Activated CD4-positive, alpha-beta T cell treated with anti-CD3 and anti-CD28 coated beads for 36 hours (primary cell): ENCODE measurements at regions of chr3 and their contacts with region 1.

Region 1: DNA sequence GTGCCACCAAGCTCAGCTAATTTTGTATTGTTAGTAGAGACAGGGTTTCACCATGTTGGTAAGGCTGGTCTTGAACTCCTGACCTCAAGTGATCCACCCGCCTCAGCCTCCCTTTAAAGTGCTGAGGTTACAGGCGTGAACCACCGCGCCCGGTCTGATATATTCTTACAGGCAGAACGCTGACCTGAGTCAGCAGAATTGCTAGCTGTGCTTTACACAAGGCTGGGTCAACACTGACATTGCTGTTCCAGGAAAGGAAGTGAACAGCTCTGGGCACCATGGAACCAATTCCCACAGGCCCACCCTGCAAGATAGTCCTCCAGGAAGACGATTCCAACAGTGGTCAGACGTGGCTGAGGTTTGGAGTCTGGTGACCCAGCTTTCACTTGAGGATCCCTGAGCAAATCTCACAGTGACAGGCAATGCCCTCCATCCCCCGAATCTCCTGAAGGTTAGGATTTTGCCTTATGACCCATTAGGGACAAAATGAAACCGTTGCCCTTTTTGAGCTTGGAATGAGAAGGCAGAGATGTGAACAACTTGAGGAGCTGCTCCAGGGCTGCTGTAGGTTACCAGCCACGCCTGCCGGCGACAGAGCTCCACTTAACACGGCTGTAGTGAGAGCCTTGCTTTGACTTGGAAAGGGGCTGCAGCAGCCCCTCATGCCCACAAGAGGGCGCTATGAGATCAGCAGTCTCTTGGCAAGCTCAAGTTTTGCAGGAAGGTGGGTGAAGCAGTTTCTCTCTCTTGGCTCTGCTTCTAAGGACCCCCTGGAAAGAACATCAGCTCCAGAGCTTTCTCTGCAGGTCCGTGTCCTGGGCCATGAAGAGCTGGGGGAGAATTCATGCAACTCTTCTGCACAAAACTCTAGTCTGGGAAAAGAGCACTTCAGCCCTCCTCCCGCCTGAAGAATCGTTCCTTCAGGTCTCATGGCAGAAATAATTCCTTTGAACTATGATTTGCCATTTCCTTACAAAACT is 74.1 kb downstream of the SENP2 start:
- DNase-seq: peak; percentile 85
- ATAC-seq: peak; percentile 95
- H3K4me3 Mint-ChIP-seq: no peak overlapping the region
- H3K27ac Mint-ChIP-seq: no peak overlapping the region
- H3K4me1 Mint-ChIP-seq: peaks cover 2% of the 10 kb centered on the region
- H3K27me3 Mint-ChIP-seq: peaks cover 17% of the 10 kb centered on the region

Region 2: DNA sequence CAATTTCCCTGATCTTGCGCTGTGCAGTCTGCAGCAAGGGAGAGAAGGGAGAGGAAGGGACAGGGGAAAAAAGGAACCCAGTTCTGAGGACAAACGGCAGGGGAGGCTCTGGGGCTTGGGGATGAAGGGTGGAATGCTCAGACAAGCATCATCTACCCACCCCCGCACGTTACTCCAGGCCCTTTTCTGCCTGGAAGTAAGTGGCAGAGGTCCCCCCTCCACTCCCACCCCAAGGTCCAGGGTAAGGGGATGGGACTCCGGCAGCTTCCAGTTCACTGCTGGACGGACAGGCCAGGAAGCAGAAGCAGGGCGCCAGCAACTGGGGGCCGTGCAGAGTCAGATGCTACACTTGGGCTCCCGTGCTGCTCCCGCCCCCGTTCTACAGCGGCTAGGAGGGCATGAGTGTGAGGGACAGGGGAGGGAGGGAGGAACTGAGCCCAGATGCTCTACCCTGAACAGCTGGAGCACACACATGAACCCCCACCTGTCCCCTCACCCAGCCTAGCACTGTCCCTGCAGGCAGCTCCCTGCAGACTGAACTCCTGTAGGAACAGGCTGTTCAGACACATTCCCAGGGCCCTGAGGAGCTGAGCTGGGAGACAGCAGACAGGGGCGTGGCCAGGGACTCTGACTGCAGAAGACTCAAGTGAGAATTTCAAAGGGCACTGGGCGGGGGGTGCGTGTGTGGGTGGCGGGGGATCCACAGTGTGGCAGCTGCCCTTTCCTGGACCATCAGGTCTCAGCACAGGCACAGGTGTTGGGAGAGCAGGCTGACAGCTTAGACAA is 14.4 kb before region 1 on chr3:
- CTCF ChIA-PET with region 1: interaction called, 18 read pairs
- POLR2A ChIA-PET with region 1: no interaction called
- intact Hi-C with region 1: no loop called
- DNase-seq: no peak
- ATAC-seq: no peak
- H3K4me3 Mint-ChIP-seq: no peak overlapping the region
- H3K27ac Mint-ChIP-seq: no peak overlapping the region
- H3K4me1 Mint-ChIP-seq: no peaks in the 10 kb centered on the region
- H3K27me3 Mint-ChIP-seq: peaks cover 10% of the 10 kb centered on the region

Region 3: GRCh38 chr3:185693985-185694653 is 33.9 kb after region 1 on chr3:
- CTCF ChIA-PET with region 1: interaction called, 13 read pairs
- POLR2A ChIA-PET with region 1: no interaction called
- intact Hi-C with region 1: no loop called
- DNase-seq: no peak
- ATAC-seq: no peak
- H3K4me3 Mint-ChIP-seq: no peak overlapping the region
- H3K27ac Mint-ChIP-seq: no peak overlapping the region
- H3K4me1 Mint-ChIP-seq: no peaks in the 10 kb centered on the region
- H3K27me3 Mint-ChIP-seq: peaks cover 6% of the 10 kb centered on the region

Region 4: DNA sequence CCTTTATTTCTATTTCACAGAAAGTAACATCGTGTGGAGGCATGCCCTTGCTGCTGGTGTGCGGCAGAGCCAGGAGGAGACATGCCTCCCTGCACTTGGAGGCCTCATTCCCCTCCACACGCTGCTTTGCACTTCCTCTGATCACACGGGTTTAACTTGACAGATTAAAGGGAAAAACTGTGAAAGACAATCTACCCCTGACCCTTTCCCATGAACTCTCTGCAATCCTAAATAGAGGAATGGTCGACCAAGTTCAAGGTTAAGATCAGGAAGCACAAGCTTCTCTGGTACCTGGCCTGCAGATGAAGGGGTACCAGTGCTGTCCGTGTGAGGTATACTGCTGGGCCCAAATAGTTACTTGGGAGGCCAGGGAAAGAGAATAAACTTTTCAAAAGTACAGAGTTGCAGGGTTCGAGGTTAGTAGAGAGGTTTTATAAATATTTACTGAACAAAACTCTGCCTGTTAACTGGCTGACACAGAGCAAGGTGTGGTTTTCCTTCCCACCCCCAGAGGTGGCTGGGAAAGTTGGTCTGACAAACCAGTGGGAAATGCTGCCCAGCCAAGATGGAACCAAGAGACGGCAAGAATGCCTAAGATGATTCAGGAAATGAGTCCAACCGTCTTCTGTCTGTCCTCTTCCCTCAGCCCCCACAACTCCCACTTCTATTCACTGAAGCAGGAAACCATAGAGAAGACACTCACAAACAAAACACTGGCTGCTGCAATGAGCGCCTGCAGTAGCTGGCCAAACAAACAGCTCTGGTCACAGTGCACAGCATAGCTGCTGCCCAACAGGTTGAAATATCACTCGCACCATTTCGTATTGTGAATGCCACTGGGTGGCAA is 85.0 kb after region 1 on chr3:
- CTCF ChIA-PET with region 1: interaction called, 13 read pairs
- POLR2A ChIA-PET with region 1: no interaction called
- intact Hi-C with region 1: no loop called
- DNase-seq: no peak
- ATAC-seq: no peak
- H3K4me3 Mint-ChIP-seq: no peak overlapping the region
- H3K27ac Mint-ChIP-seq: no peak overlapping the region
- H3K4me1 Mint-ChIP-seq: peaks cover 5% of the 10 kb centered on the region
- H3K27me3 Mint-ChIP-seq: peaks cover 2% of the 10 kb centered on the region

Region 5: DNA sequence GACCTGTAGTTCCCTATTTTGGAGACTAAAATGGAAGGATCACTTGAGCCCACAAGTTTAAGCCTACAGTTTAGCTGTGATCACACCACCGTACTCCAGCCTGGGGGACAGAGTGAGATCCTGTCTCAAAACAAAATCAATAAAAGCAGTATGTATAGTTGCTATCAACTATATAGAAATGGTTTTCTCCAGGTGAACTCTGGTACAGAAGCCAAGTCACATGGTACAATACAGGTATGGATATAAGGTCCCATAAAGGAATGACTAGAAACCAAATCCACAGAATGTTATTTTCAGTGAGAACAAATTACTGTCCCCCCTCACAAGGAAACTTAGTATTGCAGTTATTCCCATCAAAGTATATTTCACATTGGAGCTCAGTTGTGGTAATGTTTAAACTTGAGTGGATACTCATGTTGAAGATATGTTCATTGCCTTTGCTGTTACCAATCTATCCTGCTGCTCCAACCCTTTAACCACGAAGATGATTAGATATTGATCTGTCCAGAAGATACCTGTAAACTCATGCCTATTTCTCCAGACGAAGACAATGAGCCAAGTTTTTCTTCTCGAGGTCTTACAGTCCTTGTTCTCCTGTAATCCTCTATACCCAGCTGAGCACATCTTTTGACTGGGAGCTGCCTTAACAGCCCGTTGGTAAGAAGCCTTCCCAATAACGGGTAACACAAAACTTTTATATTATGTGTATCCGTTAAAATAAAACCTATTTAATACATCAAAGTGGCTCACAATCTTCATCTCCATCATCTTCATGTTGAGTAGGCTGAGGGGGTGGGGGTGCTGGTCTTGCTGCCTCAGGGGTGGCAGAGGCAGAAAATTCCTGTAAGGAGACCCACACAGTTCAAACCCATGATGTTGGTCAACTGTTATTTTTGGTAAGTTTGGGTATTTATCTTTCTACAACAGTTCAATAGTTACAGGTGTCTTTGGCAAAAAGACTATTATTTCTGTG is 253.0 kb after region 1 on chr3:
- CTCF ChIA-PET with region 1: interaction called, 3 read pairs
- POLR2A ChIA-PET with region 1: interaction called, 5 read pairs
- intact Hi-C with region 1: loop called in 1 of 2 experiments (anchors 10 kb)
- DNase-seq: no peak
- ATAC-seq: peak; percentile 27
- H3K4me3 Mint-ChIP-seq: no peak overlapping the region
- H3K27ac Mint-ChIP-seq: peak overlapping the region; percentile 55
- H3K4me1 Mint-ChIP-seq: peaks cover 1% of the 10 kb centered on the region
- H3K27me3 Mint-ChIP-seq: no peaks in the 10 kb centered on the region